A549 (cell line): ENCODE measurements at regions of chr11 and their contacts with region 1.

Region 1: GRCh38 chr11:122781378-122782195 is 56.7 kb upstream of the CRTAM start:
- DNase-seq: peak; percentile 83 to 84
- ATAC-seq: peak; percentile 95 to 97
- H3K4me3 ChIP-seq: no peak overlapping the region
- H3K27ac ChIP-seq: peak overlapping the region; percentile 54 to 68; a peak in 5 of 6 replicates
- H3K4me1 ChIP-seq: peaks cover 23% of the 10 kb centered on the region
- CTCF ChIP-seq: peak; percentile 77
- EP300 ChIP-seq: no peak
- POLR2A ChIP-seq: no peak
- RAD21 ChIP-seq: peak; percentile 88 to 92

Region 2: GRCh38 chr11:122642472-122642922 is 139.1 kb before region 1 on chr11:
- CTCF ChIA-PET with region 1: interaction called, 14 read pairs
- POLR2A ChIA-PET with region 1: no interaction called
- DNase-seq: peak; percentile 82 to 95
- ATAC-seq: peak; percentile 95 to 96
- H3K4me3 ChIP-seq: peak overlapping the region; percentile 24
- H3K27ac ChIP-seq: peak overlapping the region; percentile 92 to 97
- H3K4me1 ChIP-seq: peaks cover 49% of the 10 kb centered on the region
- CTCF ChIP-seq: no peak
- EP300 ChIP-seq: peak; percentile 81 to 84
- POLR2A ChIP-seq: no peak
- RAD21 ChIP-seq: peak; percentile 8 to 37; a peak in 1 of 5 replicates

Region 3: DNA sequence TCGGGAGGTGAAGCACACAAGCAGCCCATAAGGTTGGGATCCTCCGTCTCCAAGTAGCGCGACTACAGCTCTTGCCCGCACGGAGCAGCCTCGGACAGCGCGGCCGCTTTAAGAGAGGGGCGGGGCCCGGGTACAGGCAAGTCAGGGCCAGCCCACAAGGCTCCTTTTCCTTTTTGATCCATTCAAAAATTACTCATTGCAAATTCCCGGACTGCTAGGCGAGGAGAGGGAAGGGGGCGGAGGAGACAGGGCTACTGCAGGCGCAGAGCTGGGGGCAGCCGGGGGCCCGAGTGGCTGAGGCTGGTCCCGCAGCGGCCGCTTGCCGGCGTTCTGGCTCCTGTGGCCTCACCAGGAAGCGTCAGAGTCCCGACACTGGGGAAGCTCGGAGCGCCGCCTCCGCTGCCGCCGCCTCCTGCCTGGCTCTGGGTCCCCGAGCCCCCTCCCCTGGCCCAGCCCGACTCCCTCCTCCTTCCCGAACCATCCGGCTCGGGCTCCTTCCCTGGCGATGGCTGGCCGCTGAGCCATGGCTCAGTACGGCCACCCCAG is 126.0 kb before region 1 on chr11 and contains the start of gene UBASH3B:
- CTCF ChIA-PET with region 1: interaction called, 14 read pairs
- POLR2A ChIA-PET with region 1: interaction called, 14 read pairs
- DNase-seq: peak; percentile 67 to 84
- ATAC-seq: peak; percentile 83 to 91
- H3K4me3 ChIP-seq: peak within 1 kb of the TSS; percentile 77
- H3K27ac ChIP-seq: peak within 1 kb of the TSS; percentile 91 to 99
- H3K4me1 ChIP-seq: peaks cover 51% of the 10 kb centered on the region
- CTCF ChIP-seq: no peak
- EP300 ChIP-seq: no peak
- POLR2A ChIP-seq: peak; percentile 77
- RAD21 ChIP-seq: no peak; a peak in 1 of 5 replicates
- polyA plus RNA-seq, gene UBASH3B: 43.0 and 52.2 TPM in 2 replicates

Region 4: DNA sequence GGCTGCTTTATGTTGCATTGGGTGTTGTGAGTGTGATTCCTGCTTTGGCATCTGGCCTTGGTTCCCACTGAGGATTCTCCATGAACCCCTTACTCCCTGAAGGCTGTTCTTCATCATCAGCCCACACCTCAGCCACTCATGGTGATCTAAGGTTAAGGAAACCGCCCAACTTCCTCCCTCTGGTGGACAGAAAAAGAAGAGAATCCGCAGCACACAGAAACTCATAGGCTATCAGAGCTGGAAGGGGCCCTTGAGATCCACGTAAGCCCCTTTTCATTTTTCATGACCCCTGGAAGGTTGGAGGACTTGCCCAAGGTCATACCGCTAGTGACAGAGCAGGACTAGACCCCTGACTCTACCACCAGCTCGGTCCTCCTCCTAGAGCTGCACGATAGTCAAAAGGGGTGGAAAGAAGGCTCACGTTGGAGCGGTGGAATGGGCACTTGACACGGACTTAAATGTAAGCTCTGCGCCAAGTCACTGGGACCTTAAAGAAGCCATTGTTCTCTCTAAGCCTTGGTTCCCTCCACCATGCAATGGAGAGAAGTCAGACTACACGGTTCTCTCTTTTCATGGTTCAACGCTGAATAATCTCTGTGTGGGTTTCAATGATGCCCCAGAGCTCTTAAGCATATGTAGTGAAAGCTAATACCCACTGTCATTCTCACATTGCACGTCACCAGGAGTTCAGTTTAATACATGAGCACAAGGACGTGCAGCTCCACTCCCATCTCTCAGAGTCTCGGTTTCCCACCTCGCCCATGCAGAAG is 26.8 kb before region 1 on chr11:
- CTCF ChIA-PET with region 1: interaction called, 26 read pairs
- POLR2A ChIA-PET with region 1: no interaction called
- DNase-seq: no peak
- ATAC-seq: peak; percentile 56 to 76; a peak in 3 of 6 replicates
- H3K4me3 ChIP-seq: no peak overlapping the region
- H3K27ac ChIP-seq: no peak overlapping the region
- H3K4me1 ChIP-seq: peaks cover 17% of the 10 kb centered on the region; the same call in 1 of the 3 replicates
- CTCF ChIP-seq: no peak; the same call in 1 of the 3 replicates
- EP300 ChIP-seq: no peak
- POLR2A ChIP-seq: no peak
- RAD21 ChIP-seq: peak in 1 of 2 experiments; percentile 27; a peak in 2 of 5 replicates

Region 5: GRCh38 chr11:122796128-122796717 is 14.6 kb after region 1 on chr11:
- CTCF ChIA-PET with region 1: interaction called, 24 read pairs
- POLR2A ChIA-PET with region 1: no interaction called
- DNase-seq: peak; percentile 19 to 26
- ATAC-seq: peak; percentile 54 to 81; a peak in 5 of 6 replicates
- H3K4me3 ChIP-seq: no peak overlapping the region
- H3K27ac ChIP-seq: no peak overlapping the region
- H3K4me1 ChIP-seq: peaks cover 9% of the 10 kb centered on the region
- CTCF ChIP-seq: peak; percentile 43
- EP300 ChIP-seq: no peak
- POLR2A ChIP-seq: no peak
- RAD21 ChIP-seq: peak; percentile 18 to 37; a peak in 2 of 5 replicates

Region 6: DNA sequence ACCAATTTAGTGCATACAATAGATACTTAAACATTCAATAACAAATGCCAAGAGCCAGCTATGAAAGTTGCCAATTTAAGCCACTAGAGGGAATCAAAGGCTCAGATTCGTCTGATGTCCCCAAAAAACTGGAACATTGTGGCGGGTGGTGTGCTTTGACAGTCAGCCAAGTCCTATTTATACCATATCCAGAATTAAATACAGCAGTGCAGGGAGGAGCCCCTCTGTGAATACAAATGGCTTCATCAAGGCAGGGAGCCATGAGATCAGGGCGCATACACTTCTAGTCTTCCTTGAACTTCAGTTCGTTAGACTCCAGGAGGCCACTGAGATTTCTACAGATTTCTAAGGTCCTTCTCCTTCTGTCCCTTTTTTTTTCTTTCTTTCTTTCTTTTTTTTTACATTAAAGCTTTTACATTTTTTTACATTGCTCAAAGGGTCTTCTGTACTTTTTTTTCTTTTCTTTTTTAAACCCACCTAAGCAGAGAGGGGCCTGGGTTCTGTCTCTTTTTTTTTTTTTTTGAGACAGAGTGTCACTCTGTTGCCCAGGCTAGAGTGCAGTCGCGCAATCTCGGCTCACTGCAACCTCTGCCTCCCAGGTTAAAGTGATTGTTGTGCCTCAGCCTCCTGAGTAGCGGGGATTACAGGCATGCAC is 321.9 kb after region 1 on chr11:
- CTCF ChIA-PET with region 1: no interaction called
- POLR2A ChIA-PET with region 1: no interaction called
- DNase-seq: peak; percentile 26 to 59
- ATAC-seq: peak; percentile 74 to 84; a peak in 5 of 6 replicates
- H3K4me3 ChIP-seq: no peak overlapping the region
- H3K27ac ChIP-seq: no peak overlapping the region
- H3K4me1 ChIP-seq: no peaks in the 10 kb centered on the region; the same call in 1 of the 3 replicates
- CTCF ChIP-seq: peak; percentile 69
- EP300 ChIP-seq: no peak
- POLR2A ChIP-seq: no peak
- RAD21 ChIP-seq: peak; percentile 81 to 83